ENCODE measurements at regions of chr4 and their contacts with region 1.

Region 1: GRCh38 chr4:176277162-176277904 is 8.3 kb upstream of the ASB5 start:
- DNase-seq: no peak
- ATAC-seq: peak; percentile 50
- H3K4me3 Mint-ChIP-seq: no peak overlapping the region
- H3K27ac Mint-ChIP-seq: no peak overlapping the region
- H3K4me1 Mint-ChIP-seq: no peaks in the 10 kb centered on the region
- H3K27me3 Mint-ChIP-seq: peaks cover 18% of the 10 kb centered on the region
- CTCF ChIP-seq: no peak

Region 2: DNA sequence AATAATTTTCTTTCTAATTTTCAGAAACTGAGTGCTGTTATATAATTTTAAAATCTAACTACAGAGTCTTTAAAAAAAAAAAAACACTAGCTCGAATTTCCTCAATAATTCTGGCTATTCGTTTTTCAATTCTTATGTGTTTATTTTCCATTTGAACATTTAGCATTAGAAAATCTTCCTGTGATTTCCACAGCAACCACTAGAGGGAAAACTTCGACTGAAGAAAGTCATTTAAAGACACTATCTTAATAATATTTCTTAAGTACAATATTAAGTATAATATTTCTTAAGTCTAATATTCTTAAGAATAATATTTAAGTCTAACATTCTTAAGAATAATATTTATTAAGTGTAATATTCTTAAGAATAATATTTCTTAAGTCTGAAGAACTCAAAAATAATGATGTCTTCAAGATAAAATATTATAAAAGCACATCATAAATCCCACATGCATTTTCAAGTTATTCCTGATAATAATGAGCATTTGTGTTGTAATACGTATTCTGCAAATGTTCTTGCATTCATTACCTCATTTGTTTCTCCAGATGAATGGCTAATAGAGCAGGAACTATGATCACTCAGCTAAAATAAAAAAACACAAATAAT is 330.1 kb before region 1 on chr4:
- CTCF ChIA-PET with region 1: no interaction called
- POLR2A ChIA-PET with region 1: no interaction called
- intact Hi-C with region 1: loop called (anchors 1 kb)
- DNase-seq: no peak
- ATAC-seq: no peak
- H3K4me3 Mint-ChIP-seq: no peak overlapping the region
- H3K27ac Mint-ChIP-seq: no peak overlapping the region
- H3K4me1 Mint-ChIP-seq: peaks cover 6% of the 10 kb centered on the region
- H3K27me3 Mint-ChIP-seq: no peaks in the 10 kb centered on the region
- CTCF ChIP-seq: peak; percentile 18

Region 3: DNA sequence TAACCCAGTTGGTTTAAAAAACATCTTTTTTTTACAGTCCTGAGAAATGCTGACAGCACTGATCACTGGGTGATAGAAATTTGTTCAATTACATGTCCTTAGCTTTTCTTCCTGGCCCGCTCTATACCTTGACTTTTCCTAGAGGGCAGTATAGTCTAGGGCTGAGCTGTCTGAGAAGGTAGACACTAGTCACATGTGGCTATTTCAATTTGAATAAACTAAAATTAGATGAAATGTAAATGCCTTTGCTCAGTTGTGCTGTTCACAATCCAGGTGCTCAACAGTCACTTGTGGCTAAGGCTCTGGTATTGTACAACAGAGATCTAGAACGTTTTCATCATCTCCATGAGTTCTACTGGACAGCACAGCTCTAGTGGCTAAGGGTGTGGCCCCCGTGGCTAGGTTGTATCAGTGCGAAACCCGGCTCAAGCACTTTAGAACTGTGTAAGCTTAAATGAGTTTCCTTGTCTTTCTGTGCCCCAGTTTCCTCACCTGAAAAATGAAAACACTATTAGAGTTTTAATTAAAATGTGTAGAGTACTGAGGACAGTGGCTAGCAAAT is 323.3 kb before region 1 on chr4:
- CTCF ChIA-PET with region 1: no interaction called
- POLR2A ChIA-PET with region 1: no interaction called
- intact Hi-C with region 1: loop called (anchors 2 kb)
- DNase-seq: no peak
- ATAC-seq: peak; percentile 75
- H3K4me3 Mint-ChIP-seq: no peak overlapping the region
- H3K27ac Mint-ChIP-seq: no peak overlapping the region
- H3K4me1 Mint-ChIP-seq: peaks cover 9% of the 10 kb centered on the region
- H3K27me3 Mint-ChIP-seq: peaks cover 1% of the 10 kb centered on the region
- CTCF ChIP-seq: no peak

Region 4: GRCh38 chr4:176034499-176034898 is 242.8 kb before region 1 on chr4:
- CTCF ChIA-PET with region 1: no interaction called
- POLR2A ChIA-PET with region 1: no interaction called
- intact Hi-C with region 1: loop called (anchors 1 kb)
- DNase-seq: no peak
- ATAC-seq: no peak
- H3K4me3 Mint-ChIP-seq: no peak overlapping the region
- H3K27ac Mint-ChIP-seq: no peak overlapping the region
- H3K4me1 Mint-ChIP-seq: peaks cover 4% of the 10 kb centered on the region
- H3K27me3 Mint-ChIP-seq: no peaks in the 10 kb centered on the region
- CTCF ChIP-seq: no peak

Region 5: GRCh38 chr4:176150356-176150682 is 127.0 kb before region 1 on chr4:
- CTCF ChIA-PET with region 1: no interaction called
- POLR2A ChIA-PET with region 1: no interaction called
- intact Hi-C with region 1: loop called (anchors 2 kb)
- DNase-seq: no peak
- ATAC-seq: no peak
- H3K4me3 Mint-ChIP-seq: no peak overlapping the region
- H3K27ac Mint-ChIP-seq: no peak overlapping the region
- H3K4me1 Mint-ChIP-seq: no peaks in the 10 kb centered on the region
- H3K27me3 Mint-ChIP-seq: no peaks in the 10 kb centered on the region
- CTCF ChIP-seq: no peak

Region 6: DNA sequence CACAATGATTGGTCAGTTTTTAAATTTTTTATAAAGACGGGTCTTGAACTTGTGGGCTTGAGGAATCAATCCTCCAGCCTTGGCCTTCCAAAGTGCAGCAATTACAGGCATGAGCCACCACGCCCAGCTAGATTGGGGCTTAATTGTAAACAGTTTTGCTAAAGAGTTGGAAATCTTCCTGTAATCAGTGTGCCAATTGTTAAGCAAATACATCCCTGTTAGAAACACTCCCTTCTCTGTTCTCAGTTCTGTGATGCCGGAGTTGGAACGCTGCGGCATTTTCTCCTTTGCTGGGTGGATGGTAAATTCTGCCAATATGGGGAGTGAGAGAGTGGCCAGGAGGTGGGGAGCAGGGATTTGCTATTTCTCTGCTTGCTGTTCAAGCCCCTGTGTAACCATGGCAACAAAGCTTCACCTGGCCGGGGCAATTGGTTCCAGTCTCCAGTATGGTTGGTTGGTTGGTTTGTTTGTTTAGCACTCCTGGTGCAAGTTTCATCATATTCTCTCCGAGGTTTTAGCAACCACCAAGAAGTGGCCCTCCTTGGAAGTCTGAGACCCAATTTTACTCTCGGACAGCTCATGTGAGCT is 78.9 kb before region 1 on chr4:
- CTCF ChIA-PET with region 1: no interaction called
- POLR2A ChIA-PET with region 1: no interaction called
- intact Hi-C with region 1: no loop called
- DNase-seq: no peak
- ATAC-seq: no peak
- H3K4me3 Mint-ChIP-seq: no peak overlapping the region
- H3K27ac Mint-ChIP-seq: no peak overlapping the region
- H3K4me1 Mint-ChIP-seq: peaks cover 10% of the 10 kb centered on the region
- H3K27me3 Mint-ChIP-seq: peaks cover 31% of the 10 kb centered on the region
- CTCF ChIP-seq: no peak

Region 7: DNA sequence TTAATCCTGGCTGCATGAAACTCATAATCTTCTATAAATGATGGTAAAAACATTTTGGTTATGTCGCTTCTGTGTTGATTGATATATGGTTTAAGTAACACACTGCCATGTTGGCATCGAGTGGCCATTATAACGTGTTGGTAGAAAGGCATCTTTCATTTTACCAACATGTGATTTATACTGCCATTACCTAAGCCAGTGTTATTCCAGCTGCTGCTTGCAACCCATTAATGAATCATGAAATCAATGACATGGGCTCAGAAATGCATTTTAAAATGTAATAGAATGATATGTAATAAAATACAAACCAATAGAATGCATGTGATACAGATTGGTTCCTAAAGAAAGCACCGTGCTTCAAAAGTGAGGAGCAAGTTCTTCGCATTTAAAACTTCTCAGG is 413.4 kb after region 1 on chr4:
- CTCF ChIA-PET with region 1: no interaction called
- POLR2A ChIA-PET with region 1: no interaction called
- intact Hi-C with region 1: no loop called
- DNase-seq: no peak
- ATAC-seq: no peak
- H3K4me3 Mint-ChIP-seq: no peak overlapping the region
- H3K27ac Mint-ChIP-seq: no peak overlapping the region
- H3K4me1 Mint-ChIP-seq: no peaks in the 10 kb centered on the region
- H3K27me3 Mint-ChIP-seq: no peaks in the 10 kb centered on the region
- CTCF ChIP-seq: no peak

Measured in activated B cell treated with CpG ODN at 0.5 μM for 24 hours (primary cell).